ENCODE measurements at regions of chr15 and their contacts with region 1.

Region 1: DNA sequence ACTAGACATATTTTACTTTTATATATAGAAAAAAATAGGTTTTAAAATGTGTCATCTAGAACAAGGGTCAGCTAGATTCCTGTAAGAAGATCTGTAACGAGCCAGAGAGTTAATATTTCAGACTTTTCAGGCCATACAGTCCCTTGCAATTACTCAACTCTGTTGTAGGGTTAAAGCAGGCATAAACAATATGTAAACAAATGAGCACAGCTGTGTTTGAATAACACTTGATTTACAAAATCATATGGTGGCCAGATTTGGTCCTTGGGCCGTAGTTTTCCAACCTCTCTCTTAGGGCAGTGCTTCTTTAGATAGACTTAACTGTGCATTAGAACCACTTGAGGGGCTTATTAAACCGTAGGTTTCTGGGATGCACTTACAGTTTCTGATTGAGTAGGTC is 19.6 kb downstream of the LRRC57 start:
- DNase-seq: no peak
- H3K4me3 ChIP-seq: no peak overlapping the region
- H3K27ac ChIP-seq: no peak overlapping the region
- H3K4me1 ChIP-seq: no peaks in the 10 kb centered on the region
- H3K27me3 ChIP-seq: no peaks in the 10 kb centered on the region
- CTCF ChIP-seq: no peak
- POLR2A ChIP-seq: no peak

Region 2: DNA sequence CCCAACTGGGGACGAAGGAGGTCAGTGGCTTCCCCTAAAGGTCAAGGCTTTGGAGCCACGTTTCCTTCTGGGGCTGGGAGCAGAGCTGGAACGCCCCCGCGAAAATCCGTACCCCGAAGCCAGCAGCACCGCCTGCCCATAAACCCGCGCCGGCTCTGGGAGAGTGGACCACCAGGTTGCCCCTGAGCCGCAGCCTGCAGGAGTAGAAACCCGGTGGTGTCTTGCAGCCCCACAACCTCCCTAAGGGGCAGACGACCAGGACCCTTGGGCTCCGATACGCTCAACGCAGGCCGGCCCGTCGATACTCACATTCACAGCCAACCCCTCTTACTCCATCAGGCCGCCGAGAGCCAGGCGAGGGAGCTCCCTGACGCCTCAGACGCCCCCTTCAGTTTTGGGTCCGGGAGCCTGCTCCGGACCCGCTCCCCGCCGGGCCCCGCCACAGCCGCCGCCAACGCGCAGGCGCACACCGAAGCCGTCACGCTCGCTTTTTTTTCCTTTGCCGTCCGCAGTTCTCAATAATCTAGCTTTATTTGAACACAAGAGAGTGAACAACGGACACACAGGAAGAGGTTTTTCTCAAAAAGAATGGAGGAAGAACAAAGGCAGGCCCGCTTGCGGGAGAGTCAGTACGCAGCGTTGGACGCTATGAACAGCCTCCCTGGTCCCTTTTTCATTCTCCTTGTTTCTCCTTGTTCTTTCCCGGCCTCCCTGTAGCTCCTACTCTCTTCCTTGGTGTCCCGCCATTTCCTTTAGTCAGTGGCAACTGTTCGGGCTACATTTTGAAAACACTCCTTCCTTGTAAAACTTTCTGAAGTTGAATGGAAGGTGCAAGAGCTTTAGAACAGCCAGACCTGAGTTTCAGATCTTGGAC is 38.1 kb before region 1 on chr15 and contains the start of gene ZNF106:
- intact Hi-C with region 1: no loop called
- DNase-seq: peak; percentile 67 to 83
- H3K4me3 ChIP-seq: peak within 1 kb of the TSS; percentile 81 to 94 (median 93)
- H3K27ac ChIP-seq: peak within 1 kb of the TSS; percentile 93 to 97
- H3K4me1 ChIP-seq: peaks cover 0 to 7% of the 10 kb centered on the region in 2 donors
- H3K27me3 ChIP-seq: no peaks in the 10 kb centered on the region
- CTCF ChIP-seq: peak in 1 of 3 donors; percentile 14
- POLR2A ChIP-seq: peak; percentile 78
- total RNA-seq, gene ZNF106: 59.6 to 151 (median 60.0) TPM

Region 3: GRCh38 chr15:42604894-42605744 is 76.1 kb after region 1 on chr15:
- intact Hi-C with region 1: loop called (anchors 2 kb)
- DNase-seq: no peak
- H3K4me3 ChIP-seq: no peak overlapping the region
- H3K27ac ChIP-seq: peak overlapping the region; percentile 56 to 58
- H3K4me1 ChIP-seq: no peaks in the 10 kb centered on the region
- H3K27me3 ChIP-seq: no peaks in the 10 kb centered on the region
- CTCF ChIP-seq: no peak
- POLR2A ChIP-seq: no peak

Region 4: GRCh38 chr15:42914728-42915497 is 385.9 kb after region 1 on chr15:
- intact Hi-C with region 1: no loop called
- DNase-seq: no peak
- H3K4me3 ChIP-seq: no peak overlapping the region
- H3K27ac ChIP-seq: no peak overlapping the region
- H3K4me1 ChIP-seq: peaks cover 0 to 7% of the 10 kb centered on the region in 2 donors
- H3K27me3 ChIP-seq: no peaks in the 10 kb centered on the region
- CTCF ChIP-seq: no peak
- POLR2A ChIP-seq: no peak

Measured in breast epithelium (tissue), 4 donors.